PC-9 (cell line): ENCODE measurements at regions of chr7 and their contacts with region 1.

Region 1: DNA sequence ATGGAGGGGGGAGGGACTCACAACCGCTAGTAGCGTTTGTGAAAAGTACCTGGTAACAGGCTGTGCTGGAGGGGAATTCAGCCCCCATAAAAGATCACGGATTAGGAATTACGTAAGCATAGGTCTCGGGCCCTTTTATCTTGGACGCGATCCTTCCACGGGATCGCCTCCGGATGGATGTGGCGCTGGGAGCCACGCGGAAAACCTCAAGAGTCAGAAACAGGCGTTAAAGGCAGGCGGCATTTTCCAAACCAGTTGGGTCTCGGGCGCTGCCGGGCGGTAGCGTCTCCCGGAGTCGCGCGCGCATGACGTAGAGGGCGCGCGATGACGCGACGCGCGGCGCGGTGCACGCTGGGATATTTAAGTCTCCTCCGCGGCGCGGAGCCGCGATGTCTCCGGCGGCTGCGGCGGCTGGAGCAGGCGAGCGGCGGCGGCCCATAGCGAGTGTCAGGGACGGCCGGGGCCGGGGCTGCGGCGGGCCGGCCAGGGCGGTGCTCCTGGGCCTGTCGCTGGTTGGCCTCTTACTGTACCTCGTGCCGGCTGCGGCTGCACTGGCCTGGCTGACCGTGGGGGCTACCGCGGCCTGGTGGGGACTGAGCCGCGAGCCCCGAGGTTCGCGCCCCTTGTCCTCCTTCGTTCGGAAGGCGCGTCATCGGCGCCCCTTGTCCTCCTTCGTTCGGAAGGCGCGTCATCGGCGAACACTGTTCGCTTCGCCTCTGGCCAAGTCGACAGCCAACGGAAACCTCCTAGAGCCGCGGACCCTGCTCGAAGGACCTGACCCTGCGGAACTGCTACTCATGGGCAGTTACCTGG is at the start of gene POM121:
- DNase-seq: peak; percentile 65 to 84
- H3K4me3 ChIP-seq: peak within 1 kb of the TSS; percentile 97
- H3K27ac ChIP-seq: peak within 1 kb of the TSS; percentile 78
- H3K4me1 ChIP-seq: peaks cover 15% of the 10 kb centered on the region; the same call in 1 of the 2 replicates
- H3K27me3 ChIP-seq: no peaks in the 10 kb centered on the region
- CTCF ChIP-seq: no peak
- total RNA-seq, gene POM121: 36.6 and 49.0 TPM in 2 replicates

Region 2: GRCh38 chr7:73451780-73452398 is 527.0 kb after region 1 on chr7:
- CTCF ChIA-PET with region 1: no interaction called
- POLR2A ChIA-PET with region 1: no interaction called
- intact Hi-C with region 1: loop called (anchors 10 kb)
- DNase-seq: no peak
- H3K4me3 ChIP-seq: no peak overlapping the region
- H3K27ac ChIP-seq: no peak overlapping the region
- H3K4me1 ChIP-seq: no peaks in the 10 kb centered on the region
- H3K27me3 ChIP-seq: no peaks in the 10 kb centered on the region
- CTCF ChIP-seq: peak; percentile 98